Right ventricle myocardium inferior (tissue), 1 donor: ENCODE measurements at regions of chr13 and their contacts with region 1.

Region 1: GRCh38 chr13:37295071-37295470 is 189.6 kb upstream of the CSNK1A1L start:
- DNase-seq: peak; percentile 78
- ATAC-seq: peak; percentile 90

Region 2: DNA sequence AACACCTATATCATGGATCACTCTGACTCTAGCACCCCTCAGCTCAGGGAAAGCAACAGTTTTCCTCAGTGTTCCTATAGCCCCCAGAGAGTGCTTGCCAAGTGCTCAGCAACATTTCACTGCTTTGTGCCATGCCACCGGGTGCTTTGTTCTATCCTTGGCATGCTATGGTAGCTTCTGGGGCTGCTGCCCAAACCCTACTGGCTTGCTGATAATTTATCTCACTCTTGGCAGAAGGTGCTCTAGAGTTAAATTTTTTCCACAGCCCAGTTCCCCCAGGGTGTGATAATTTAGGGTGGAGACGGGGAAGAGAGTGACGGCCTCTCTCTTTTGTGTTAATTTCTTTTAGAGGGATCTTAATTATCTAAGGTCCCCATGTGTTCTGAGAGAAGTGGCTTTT is 177.1 kb before region 1 on chr13:
- intact Hi-C with region 1: loop called (anchors 10 kb)
- DNase-seq: peak; percentile 77
- ATAC-seq: peak; percentile 90